ENCODE measurements at regions of chr1 and their contacts with region 1.

Region 1: GRCh38 chr1:189775380-189775779 is 702.3 kb downstream of the BRINP3 start:
- DNase-seq: peak; percentile 97
- ATAC-seq: peak; percentile 98
- H3K4me3 ChIP-seq: no peak overlapping the region
- H3K27ac ChIP-seq: no peak overlapping the region
- H3K4me1 ChIP-seq: peaks cover 2% of the 10 kb centered on the region; the same call in 1 of the 2 replicates
- H3K27me3 ChIP-seq: no peaks in the 10 kb centered on the region
- CTCF ChIP-seq: no peak
- POLR2A ChIP-seq: no peak
- RAD21 ChIP-seq: no peak

Region 2: DNA sequence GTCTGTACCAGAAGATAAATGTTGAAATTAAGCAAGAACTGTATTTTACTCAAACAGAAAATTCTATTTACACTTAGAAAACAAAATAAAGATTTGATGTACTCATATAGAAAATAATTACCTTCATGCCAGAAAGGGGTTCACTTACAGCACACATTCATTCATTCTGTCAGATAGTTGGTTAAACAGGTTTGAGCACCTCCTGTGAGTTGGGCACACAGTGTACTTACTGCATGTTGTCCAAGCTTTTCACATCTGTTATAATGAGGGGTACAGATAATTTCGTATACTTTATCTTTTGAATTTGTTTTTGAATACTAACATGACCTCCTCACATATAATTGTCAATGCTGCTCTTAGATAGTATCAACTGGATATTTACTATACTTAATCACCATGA is 201.0 kb before region 1 on chr1:
- CTCF ChIA-PET with region 1: no interaction called
- POLR2A ChIA-PET with region 1: no interaction called
- dilution Hi-C with region 1: no loop called
- in situ Hi-C with region 1: no loop called
- intact Hi-C with region 1: no loop called
- DNase-seq: no peak
- ATAC-seq: no peak
- H3K4me3 ChIP-seq: no peak overlapping the region
- H3K27ac ChIP-seq: no peak overlapping the region
- H3K4me1 ChIP-seq: no peaks in the 10 kb centered on the region
- H3K27me3 ChIP-seq: no peaks in the 10 kb centered on the region
- CTCF ChIP-seq: no peak
- POLR2A ChIP-seq: no peak
- RAD21 ChIP-seq: no peak

Region 3: GRCh38 chr1:189726806-189727205 is 48.6 kb before region 1 on chr1:
- CTCF ChIA-PET with region 1: no interaction called
- POLR2A ChIA-PET with region 1: no interaction called
- dilution Hi-C with region 1: no loop called
- in situ Hi-C with region 1: no loop called
- intact Hi-C with region 1: loop called (anchors 1 kb)
- DNase-seq: no peak
- ATAC-seq: no peak
- H3K4me3 ChIP-seq: no peak overlapping the region
- H3K27ac ChIP-seq: no peak overlapping the region
- H3K4me1 ChIP-seq: no peaks in the 10 kb centered on the region
- H3K27me3 ChIP-seq: no peaks in the 10 kb centered on the region
- CTCF ChIP-seq: no peak
- POLR2A ChIP-seq: no peak
- RAD21 ChIP-seq: no peak

Region 4: GRCh38 chr1:190168893-190169667 is 393.7 kb after region 1 on chr1:
- CTCF ChIA-PET with region 1: no interaction called
- POLR2A ChIA-PET with region 1: no interaction called
- dilution Hi-C with region 1: no loop called
- in situ Hi-C with region 1: no loop called
- intact Hi-C with region 1: loop called (anchors 10 kb)
- DNase-seq: peak; percentile 78
- ATAC-seq: peak; percentile 73
- H3K4me3 ChIP-seq: no peak overlapping the region
- H3K27ac ChIP-seq: no peak overlapping the region
- H3K4me1 ChIP-seq: peaks cover 3% of the 10 kb centered on the region; the same call in 1 of the 2 replicates
- H3K27me3 ChIP-seq: no peaks in the 10 kb centered on the region
- CTCF ChIP-seq: no peak
- POLR2A ChIP-seq: no peak
- RAD21 ChIP-seq: no peak